Mucosa of descending colon (tissue), 3 donors: ENCODE measurements at regions of chr1 and their contacts with region 1.

Region 1: GRCh38 chr1:209692745-209693504 is 11.7 kb upstream of the HSD11B1 start:
- DNase-seq: peak in 2 of 3 donors; percentile 66 to 83
- ATAC-seq: peak; percentile 85
- H3K4me3 ChIP-seq: no peak overlapping the region
- H3K4me1 ChIP-seq: no peaks in the 10 kb centered on the region
- CTCF ChIP-seq: peak; percentile 70

Region 2: DNA sequence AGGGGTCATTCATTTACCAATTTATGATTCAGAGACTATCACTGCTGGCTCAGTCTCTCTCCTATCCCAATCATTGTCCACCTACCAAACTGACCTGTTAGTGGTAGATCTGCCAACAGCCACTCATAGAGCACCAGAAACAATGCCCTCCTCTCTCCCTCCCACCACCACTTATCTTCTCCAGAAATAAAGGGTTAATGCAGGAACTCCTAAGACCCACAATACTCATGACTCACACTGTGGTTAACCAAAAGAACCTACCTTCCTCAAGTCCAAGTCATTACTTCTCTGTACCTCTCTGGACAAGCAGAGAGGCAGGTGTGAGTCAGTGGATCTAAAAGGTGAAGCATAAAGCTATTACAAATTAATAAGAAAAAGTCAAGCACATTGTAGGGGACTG is 150.3 kb before region 1 on chr1:
- intact Hi-C with region 1: no loop called
- DNase-seq: no peak
- ATAC-seq: no peak
- H3K4me3 ChIP-seq: no peak overlapping the region
- H3K4me1 ChIP-seq: no peaks in the 10 kb centered on the region
- CTCF ChIP-seq: no peak

Region 3: DNA sequence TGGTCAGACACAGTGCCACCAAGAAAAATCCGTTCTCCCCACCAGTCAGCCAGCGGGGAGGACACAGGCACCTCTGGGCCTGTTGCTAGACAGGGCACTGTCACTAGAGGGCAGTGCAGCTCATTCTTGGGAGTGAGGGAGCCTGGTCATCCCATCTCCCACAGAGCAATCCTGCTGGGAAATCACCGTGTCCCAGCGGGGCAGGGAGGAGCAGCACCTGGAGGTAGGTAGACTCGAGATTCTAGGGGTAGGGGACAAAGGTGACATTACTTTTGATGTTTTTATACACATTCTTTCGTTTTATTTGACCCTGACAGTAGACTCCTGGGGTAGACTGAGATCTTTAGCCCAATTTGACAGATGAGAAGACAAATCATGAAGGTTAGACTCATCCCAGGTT is 116.1 kb before region 1 on chr1:
- intact Hi-C with region 1: loop called in 1 of 2 experiments (anchors 5 kb)
- DNase-seq: peak; percentile 59 to 89 (median 88)
- ATAC-seq: peak; percentile 97
- H3K4me3 ChIP-seq: no peak overlapping the region
- H3K4me1 ChIP-seq: no peaks in the 10 kb centered on the region
- CTCF ChIP-seq: peak; percentile 85

Region 4: DNA sequence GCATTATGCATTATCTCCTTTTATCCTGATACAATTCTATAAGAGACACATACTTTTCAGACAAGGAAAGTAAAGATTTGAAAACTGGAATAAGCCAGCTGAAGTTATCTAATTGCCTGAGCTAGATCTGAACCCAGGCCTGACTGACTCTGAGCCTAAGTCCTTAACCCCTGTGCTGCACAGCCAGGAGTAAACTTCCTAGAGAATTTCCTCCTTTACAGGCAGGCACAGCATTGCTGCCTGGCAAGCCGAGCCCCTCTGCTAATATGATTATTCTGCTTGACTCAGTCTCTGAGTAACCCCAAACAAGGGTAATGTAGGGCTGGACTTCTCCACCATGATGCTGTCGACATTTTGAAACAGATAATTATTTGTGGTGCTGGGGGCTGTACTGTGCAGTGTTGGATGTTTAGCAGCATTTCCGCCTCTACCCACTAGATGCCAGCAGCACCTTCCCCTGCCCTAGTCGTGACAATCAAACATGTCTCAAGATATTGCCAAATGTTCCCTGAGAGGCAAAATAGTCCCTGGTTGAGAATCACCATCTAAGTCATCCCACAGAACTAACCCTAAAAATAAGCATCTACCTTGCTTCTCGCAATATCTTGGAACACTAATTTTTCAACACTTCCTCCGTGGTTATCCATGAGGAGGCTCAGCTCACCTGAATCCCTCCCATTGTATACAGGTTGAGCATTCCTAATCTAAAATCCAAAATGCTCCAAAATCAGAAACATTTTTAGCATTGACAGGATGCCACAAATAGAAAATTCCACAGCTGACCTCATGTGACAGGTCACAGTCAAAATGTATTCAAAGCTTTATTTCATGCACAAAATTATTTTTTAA is 90.9 kb before region 1 on chr1:
- intact Hi-C with region 1: loop called in 1 of 2 experiments (anchors 5 kb)
- DNase-seq: peak in 1 of 3 donors; percentile 63
- ATAC-seq: peak; percentile 82
- H3K4me3 ChIP-seq: no peak overlapping the region
- H3K4me1 ChIP-seq: no peaks in the 10 kb centered on the region
- CTCF ChIP-seq: no peak

Region 5: DNA sequence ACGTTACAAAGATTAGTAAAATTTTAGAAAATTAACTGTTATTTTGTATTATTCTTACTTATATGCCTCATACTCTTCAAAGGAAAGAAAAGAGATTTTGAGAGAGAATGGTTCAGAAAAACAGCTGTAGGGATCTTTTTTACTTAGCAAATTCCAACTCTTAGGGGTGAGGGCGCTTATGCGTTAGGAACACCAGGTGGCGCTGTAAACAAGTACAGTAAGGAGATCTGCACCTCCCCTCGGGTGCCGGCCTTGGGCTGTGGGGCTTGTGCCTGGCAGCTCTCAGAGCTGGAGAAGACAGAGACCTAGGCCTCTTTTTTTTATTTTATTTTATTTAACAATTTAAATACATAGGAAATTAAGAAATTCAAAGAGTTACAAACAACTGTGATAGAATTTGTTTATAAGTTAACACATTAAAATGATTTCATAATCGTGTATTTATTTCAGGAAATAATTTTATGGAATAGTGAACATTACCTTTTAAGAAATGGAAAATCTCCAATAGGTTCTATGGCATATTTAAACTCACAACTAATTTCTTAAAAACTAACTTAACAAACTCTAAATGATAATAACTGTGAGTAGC is 167.5 kb after region 1 on chr1:
- intact Hi-C with region 1: no loop called
- DNase-seq: peak; percentile 58 to 84 (median 64)
- ATAC-seq: peak; percentile 84
- H3K4me3 ChIP-seq: no peak overlapping the region
- H3K4me1 ChIP-seq: no peaks in the 10 kb centered on the region
- CTCF ChIP-seq: peak; percentile 71

Region 6: GRCh38 chr1:209873067-209873799 is 180.3 kb after region 1 on chr1:
- intact Hi-C with region 1: no loop called
- DNase-seq: no peak
- ATAC-seq: no peak
- H3K4me3 ChIP-seq: no peak overlapping the region
- H3K4me1 ChIP-seq: no peaks in the 10 kb centered on the region
- CTCF ChIP-seq: no peak